ENCODE measurements at regions of chr3 and their contacts with region 1.

Region 1: GRCh38 chr3:40452876-40453730 is 4.0 kb upstream of the RPL14 start:
- DNase-seq: peak; percentile 98
- H3K4me3 Mint-ChIP-seq: peak overlapping the region; percentile 93
- H3K27ac Mint-ChIP-seq: peak overlapping the region; percentile 92
- H3K4me1 Mint-ChIP-seq: peaks cover 26% of the 10 kb centered on the region
- H3K27me3 Mint-ChIP-seq: no peaks in the 10 kb centered on the region

Region 2: GRCh38 chr3:40258555-40258954 is 194.5 kb before region 1 on chr3:
- CTCF ChIA-PET with region 1: no interaction called
- intact Hi-C with region 1: no loop called
- DNase-seq: no peak
- H3K4me3 Mint-ChIP-seq: no peak overlapping the region
- H3K27ac Mint-ChIP-seq: no peak overlapping the region
- H3K4me1 Mint-ChIP-seq: no peaks in the 10 kb centered on the region
- H3K27me3 Mint-ChIP-seq: no peaks in the 10 kb centered on the region

Region 3: DNA sequence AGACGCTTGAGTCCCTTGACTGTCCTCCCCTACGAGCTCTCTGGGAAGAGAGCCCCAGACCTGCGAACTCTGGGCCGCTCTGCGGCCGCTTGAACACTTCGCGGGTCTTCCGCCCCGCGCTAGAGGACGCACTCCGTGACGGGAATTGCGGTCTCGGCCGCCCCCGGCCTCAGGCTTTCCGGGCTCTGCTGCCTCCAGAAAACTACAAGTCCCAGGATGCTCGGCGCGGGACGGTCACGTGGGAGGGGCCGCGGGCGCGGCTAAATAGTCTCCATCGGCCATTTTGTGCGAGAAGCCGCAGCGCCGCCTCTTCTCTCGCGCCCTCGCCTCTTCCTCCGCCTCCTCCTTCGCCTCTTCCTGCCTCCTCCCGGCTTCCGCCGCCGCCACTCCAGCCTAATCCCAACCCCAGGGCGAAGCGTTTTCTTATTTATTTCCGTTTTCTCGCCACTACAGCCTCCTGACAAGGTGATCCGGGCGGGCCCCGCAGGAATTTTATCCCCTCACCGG is 143.6 kb before region 1 on chr3 and contains the start of gene EIF1B:
- CTCF ChIA-PET with region 1: interaction called, 3 read pairs
- intact Hi-C with region 1: loop called (anchors 1 kb)
- DNase-seq: peak; percentile 99
- H3K4me3 Mint-ChIP-seq: peak within 1 kb of the TSS; percentile 99
- H3K27ac Mint-ChIP-seq: peak within 1 kb of the TSS; percentile 98
- H3K4me1 Mint-ChIP-seq: peaks cover 24% of the 10 kb centered on the region
- H3K27me3 Mint-ChIP-seq: no peaks in the 10 kb centered on the region
- total RNA-seq, gene EIF1B: 47.0 to 49.2 TPM

Region 4: DNA sequence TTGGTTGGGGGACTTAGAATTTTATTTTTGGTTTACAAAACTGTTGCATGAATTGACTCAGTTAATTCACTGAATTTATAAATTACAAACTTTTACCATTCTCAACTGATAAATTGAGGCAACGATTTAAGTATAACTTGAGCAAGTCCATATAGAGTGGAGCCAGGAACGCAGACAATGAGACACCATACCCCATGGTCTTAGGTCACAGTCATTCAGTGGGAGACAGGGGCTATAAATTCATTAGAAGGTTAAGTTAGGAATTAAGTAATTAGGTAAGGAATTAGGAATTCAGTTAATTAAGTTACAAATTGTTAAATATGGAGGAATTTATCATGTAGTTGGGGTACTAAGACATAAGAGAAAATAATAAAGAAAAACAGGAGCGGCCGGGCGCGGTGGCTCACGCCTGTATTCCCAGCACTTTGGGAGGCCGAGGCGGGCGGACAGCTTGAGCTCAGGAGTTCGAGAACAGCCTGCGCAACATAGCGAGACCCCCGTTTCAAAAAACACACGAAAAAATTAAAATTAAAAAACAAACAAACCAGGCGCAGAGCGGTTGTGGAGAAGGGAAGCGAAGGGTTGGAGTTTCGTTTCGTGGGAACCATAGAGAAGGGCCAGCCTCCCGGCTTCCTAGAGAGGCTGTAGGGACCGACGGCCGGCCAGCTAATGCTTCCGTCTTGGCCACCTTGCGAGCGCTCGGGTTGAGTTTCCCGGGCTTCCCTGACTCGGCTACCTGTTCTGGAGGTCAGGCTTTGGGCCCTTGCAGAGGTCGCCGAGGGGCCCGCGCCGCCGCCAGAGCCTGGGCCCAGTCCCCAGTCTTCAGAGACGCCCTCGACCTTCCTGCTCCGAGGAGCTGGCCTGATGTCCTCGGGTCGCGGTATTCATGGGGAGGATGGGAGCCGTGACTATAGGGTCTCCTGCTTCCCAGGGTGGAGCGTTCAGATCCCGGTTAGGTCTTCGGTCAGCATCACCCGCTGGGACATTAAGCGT is 23.7 kb after region 1 on chr3 and contains the start of gene ZNF619:
- CTCF ChIA-PET with region 1: no interaction called
- intact Hi-C with region 1: loop called (anchors 2 kb)
- DNase-seq: peak; percentile 55
- H3K4me3 Mint-ChIP-seq: peak within 1 kb of the TSS; percentile 84
- H3K27ac Mint-ChIP-seq: peak within 1 kb of the TSS; percentile 54
- H3K4me1 Mint-ChIP-seq: peaks cover 10% of the 10 kb centered on the region
- H3K27me3 Mint-ChIP-seq: no peaks in the 10 kb centered on the region
- total RNA-seq, gene ZNF619: 4.2 to 4.7 TPM

Region 5: DNA sequence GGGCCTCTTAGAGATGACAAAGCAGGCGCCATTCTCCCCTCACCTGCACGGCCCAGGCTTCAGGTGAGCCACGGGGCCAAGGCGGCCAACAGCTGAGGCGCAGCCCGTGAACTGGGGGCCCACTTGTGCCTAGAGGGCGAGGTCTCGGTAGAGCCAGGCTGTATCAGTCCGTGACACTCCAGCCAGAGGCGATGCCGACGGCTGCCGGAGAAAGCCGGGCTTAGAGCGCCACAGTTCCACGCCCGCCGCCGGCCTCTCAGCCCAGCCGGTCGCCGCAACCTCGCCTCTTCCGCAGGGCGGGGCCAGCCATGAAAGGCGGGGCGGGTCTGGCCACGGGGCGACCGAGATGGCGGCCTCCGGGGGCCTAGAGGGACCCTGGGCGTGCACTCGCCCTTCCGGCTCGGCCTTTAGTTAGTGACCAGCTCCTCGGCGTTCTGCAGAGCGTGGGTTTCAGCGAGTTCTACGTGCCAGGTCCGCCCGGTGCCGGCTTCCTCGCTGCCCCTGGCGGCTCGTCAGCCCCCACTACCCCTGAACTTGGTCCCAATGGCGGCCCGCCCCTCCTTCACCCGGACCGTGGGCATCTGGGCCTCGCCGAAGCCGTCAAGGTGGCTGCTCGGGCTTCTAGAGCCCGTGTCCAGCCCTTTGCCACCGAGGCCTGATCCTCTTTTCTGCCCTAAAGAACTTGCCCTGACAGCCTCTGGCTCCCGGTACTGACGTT is 71.6 kb after region 1 on chr3 and contains the start of gene ZNF621:
- CTCF ChIA-PET with region 1: no interaction called
- intact Hi-C with region 1: loop called (anchors 1 kb)
- DNase-seq: peak; percentile 82
- H3K4me3 Mint-ChIP-seq: peak within 1 kb of the TSS; percentile 92
- H3K27ac Mint-ChIP-seq: peak within 1 kb of the TSS; percentile 85
- H3K4me1 Mint-ChIP-seq: peaks cover 11% of the 10 kb centered on the region
- H3K27me3 Mint-ChIP-seq: no peaks in the 10 kb centered on the region
- total RNA-seq, gene ZNF621: 16.4 to 17.7 TPM